HAP-1 (cell line): ENCODE measurements at regions of chr4 and their contacts with region 1.

Region 1: DNA sequence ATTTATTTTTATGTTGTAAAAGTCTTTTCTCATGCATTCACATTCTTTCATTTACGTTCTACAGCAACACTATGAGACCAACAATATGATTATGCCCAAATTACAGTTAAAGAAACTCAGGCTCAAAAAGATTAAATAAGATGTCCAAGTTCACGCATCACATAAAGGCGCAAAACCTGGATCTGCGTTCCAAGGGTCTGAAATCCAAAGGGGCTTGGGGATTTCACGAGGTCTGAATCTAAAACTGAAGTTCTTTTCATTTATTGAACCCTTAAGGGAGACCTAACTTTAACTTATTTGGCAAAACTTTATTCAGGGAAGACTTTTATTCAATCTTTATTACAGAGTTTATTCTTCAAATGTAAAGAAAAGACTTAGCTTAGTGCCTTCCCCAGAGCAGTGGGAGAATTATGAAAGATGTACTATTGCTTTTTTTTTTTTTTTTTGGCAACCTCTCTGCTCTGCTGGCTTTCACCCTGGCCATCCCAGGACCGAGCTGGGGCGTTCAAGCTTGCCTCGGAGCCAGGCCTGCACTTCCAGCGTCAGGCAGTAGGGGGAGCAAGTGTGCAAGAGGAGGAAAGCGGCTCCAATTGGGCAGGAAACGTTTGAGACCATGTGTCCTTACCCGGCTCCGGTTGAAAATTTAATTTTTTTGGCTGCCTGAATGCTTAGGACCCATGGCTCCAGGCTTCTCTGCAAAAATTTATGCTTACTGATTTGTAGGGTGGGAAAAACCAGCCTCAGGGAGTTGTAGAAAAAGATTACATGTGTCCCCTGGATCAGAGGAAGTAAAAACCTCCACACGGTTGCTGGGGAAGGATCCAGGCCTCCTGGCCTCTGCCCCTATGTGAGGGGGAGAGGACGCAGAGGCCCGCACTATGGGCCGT is 344.3 kb upstream of the KLF3 start:
- DNase-seq: peak; percentile 44 to 95
- H3K4me3 ChIP-seq: no peak overlapping the region
- H3K4me1 ChIP-seq: peaks cover 14% of the 10 kb centered on the region
- H3K27me3 ChIP-seq: no peaks in the 10 kb centered on the region

Region 2: DNA sequence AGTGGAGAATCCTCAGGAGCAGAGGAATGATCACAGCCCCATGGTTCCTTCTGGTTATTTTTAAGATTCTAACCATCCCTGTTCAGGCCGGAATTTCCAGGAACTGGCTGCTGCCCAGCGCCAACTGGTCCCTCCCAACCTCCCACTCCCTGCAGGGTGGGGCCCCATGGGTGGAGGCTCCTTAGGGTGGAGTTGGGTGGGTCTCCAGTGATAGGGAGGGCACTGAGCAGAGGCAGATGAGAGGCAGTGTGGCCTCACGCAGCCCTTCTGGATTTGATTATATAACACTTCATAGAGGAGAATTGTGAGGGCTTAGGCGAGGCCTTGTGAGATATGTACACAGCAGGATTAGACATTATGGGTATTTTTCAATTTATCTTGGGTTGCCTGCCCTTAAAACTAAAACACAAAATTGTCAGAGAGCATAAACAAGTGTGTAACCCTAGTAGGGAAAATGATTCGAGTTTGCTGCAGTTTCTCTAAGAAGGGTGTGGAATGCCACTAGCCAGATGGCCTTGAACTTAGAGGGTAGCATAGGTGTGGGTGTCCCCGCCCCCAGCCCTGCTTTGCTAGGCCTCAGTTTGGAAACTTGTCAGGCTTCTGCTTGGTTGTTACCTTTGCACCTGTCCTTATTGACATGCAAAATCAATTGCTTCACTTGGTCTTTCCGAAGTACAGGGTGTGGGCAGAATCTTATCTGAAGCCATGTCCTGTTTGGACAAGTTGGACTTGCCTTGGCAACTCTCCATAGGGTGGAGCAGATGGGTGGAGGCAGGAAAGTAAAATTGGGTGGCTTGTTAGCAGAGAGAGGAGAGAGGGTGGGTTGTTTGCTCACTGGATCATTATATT is 353.7 kb after region 1 on chr4:
- in situ Hi-C with region 1: loop called (anchors 5 kb)
- DNase-seq: peak in 1 of 2 experiments; percentile 26
- H3K4me3 ChIP-seq: no peak overlapping the region
- H3K4me1 ChIP-seq: peaks cover 42% of the 10 kb centered on the region
- H3K27me3 ChIP-seq: no peaks in the 10 kb centered on the region

Region 3: DNA sequence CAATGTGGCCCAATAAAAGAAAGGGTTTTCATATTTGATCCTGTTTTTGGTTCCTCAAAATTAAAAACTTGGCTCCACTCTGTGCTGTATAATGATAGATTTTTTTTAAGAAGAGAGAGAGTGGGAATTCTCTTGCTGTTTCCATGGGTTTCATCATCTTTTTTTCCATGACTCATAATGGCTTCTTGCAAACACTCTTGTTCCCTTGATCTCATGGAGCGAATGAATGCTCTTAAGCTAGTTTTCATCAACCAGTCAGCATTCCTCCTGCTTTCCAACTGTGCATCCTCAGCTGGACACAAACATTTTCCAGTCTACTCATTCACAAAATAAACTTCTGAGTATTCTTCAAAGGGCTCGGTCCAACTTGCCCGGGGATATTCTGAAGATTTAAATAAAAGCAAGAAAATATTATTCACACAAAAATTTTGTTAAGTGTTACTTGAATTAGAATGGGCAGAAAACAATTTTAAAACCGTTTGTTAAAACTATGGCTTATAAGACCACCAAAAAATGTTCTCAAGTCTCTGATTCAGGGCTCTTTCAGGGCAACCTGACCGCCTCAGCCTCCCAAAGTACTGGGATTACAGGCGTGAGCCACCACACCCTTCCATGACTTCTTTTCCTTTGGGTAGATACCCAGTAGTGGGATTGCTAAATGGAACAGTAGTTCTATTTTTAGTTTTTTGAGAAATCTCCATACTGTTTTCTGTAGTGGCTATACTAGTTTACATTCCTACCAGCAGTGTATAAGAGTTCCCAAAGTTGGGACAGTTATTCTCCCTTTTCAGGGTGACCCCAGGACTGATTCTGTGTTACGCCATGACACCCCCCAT is 647.8 kb after region 1 on chr4:
- in situ Hi-C with region 1: no loop called
- DNase-seq: no peak
- H3K4me3 ChIP-seq: no peak overlapping the region
- H3K4me1 ChIP-seq: no peaks in the 10 kb centered on the region
- H3K27me3 ChIP-seq: no peaks in the 10 kb centered on the region